ENCODE measurements at regions of chr4 and their contacts with region 1.

Region 1: DNA sequence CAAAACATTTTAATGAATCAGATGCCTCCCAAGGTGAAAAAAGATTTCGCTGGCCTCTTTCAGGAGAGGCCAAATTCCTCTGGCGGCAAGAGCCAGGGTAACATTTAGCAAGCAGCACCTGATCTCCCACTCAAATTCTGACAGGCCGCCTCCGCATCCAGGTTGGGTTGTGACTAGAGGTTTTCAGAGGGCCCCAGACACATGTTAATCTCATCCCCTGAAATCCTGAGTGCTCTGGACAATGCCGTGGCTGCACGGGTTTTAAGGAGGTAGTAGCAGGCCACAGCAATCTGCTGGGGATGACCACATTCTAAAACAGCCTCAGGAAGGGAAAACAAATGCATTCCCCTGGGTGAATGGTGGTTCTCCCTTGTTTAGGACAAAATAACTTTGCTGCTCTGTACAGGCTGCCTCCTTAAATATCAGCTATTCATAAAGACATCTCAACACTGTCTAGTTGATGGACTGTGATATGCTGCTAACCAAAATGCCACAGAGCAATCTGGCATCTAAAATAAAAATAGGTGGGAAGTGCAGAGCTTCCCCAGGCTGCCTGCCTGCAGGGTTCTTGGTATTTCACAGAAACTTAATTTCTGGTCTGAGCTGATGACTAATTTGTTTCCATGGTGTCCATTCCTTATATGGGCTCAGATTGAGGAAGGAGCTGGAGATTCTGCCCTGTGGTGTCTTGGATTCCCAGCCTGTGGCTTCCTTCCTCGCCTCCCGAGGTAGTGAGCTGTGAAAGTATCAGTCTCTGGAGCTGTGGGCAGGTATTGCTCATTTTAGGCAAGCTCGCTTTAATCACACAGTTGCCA is 202.0 kb downstream of the DCLK2 start:
- DNase-seq: peak; percentile 28
- ATAC-seq: peak; percentile 69
- H3K4me3 ChIP-seq: no peak overlapping the region
- H3K27ac ChIP-seq: no peak overlapping the region
- H3K4me1 ChIP-seq: peaks cover 12% of the 10 kb centered on the region
- H3K27me3 ChIP-seq: no peaks in the 10 kb centered on the region
- CTCF ChIP-seq: no peak

Region 2: DNA sequence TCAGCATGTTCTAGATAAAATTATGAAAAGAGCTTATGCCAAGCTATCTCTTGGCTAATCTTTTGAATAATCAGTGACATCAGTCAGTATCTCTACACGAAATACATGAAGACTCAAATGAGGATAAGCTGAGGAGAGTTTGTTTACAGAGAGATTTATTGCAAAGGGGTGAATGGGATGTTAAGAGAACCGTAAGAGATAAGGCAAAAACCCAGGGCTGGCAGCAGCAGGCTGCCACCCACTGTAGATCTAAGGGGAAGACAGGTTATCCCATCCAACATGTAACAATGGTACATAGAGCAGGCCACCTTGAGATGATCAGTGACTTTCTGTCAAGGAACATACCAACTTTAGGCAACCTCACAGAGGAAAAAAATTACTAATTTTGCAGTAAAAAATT is 1406.0 kb before region 1 on chr4:
- CTCF ChIA-PET with region 1: no interaction called
- POLR2A ChIA-PET with region 1: no interaction called
- intact Hi-C with region 1: no loop called
- DNase-seq: peak; percentile 20
- ATAC-seq: no peak; the same call in 1 of the 2 replicates
- H3K4me3 ChIP-seq: no peak overlapping the region
- H3K27ac ChIP-seq: no peak overlapping the region
- H3K4me1 ChIP-seq: no peaks in the 10 kb centered on the region
- H3K27me3 ChIP-seq: no peaks in the 10 kb centered on the region
- CTCF ChIP-seq: 0 out of 2 replicates have a peak, but pooled peaks have one; percentile 13

Region 3: GRCh38 chr4:150259861-150260567 is 20.3 kb before region 1 on chr4:
- CTCF ChIA-PET with region 1: no interaction called
- POLR2A ChIA-PET with region 1: no interaction called
- intact Hi-C with region 1: loop called (anchors 1 kb)
- DNase-seq: no peak
- ATAC-seq: no peak
- H3K4me3 ChIP-seq: no peak overlapping the region
- H3K27ac ChIP-seq: no peak overlapping the region
- H3K4me1 ChIP-seq: no peaks in the 10 kb centered on the region
- H3K27me3 ChIP-seq: no peaks in the 10 kb centered on the region
- CTCF ChIP-seq: no peak

Region 4: GRCh38 chr4:150402871-150403272 is 122.6 kb after region 1 on chr4:
- CTCF ChIA-PET with region 1: no interaction called
- POLR2A ChIA-PET with region 1: no interaction called
- intact Hi-C with region 1: no loop called
- DNase-seq: no peak
- ATAC-seq: no peak
- H3K4me3 ChIP-seq: no peak overlapping the region
- H3K27ac ChIP-seq: no peak overlapping the region
- H3K4me1 ChIP-seq: no peaks in the 10 kb centered on the region
- H3K27me3 ChIP-seq: no peaks in the 10 kb centered on the region
- CTCF ChIP-seq: no peak

Region 5: GRCh38 chr4:150431221-150431620 is 150.9 kb after region 1 on chr4:
- CTCF ChIA-PET with region 1: no interaction called
- POLR2A ChIA-PET with region 1: no interaction called
- intact Hi-C with region 1: no loop called
- DNase-seq: no peak
- ATAC-seq: no peak
- H3K4me3 ChIP-seq: no peak overlapping the region
- H3K27ac ChIP-seq: no peak overlapping the region
- H3K4me1 ChIP-seq: no peaks in the 10 kb centered on the region
- H3K27me3 ChIP-seq: no peaks in the 10 kb centered on the region
- CTCF ChIP-seq: no peak

Measured in PC-3 (cell line).